Activated CD4-positive, alpha-beta memory T cell treated with anti-CD3 and anti-CD28 coated beads for 36 hours (primary cell): ENCODE measurements at regions of chr9 and their contacts with region 1.

Region 1: DNA sequence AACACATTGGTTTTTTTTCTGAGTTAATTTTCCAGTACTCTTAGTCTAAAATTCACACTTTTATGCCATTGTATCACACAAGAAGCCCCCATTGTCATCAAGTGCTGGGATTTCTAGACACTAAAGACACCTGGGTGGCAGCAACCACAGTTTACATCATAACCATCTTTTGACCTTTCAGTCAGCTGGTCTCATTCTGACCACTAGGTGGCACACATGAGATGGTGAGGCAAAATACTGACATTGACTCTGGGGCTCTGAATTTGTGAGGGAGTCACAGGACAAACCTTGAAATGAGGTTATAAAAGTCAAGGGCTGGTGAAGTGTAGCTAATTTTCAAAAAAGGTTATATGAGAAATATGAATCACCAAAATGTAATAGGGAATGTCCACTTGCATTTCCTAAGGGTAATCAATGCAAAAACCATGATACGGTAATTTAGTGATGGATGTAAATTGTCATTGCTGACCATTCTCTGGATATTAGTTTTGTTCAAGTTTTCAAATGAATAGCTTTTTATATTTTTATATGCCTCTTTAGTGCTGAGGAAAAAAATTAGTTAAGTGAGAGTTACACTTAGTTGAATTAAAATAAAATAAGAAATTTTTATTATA is 229.4 kb downstream of the DMAC1 start:
- DNase-seq: peak; percentile 70
- H3K4me3 Mint-ChIP-seq: no peak overlapping the region
- H3K27ac Mint-ChIP-seq: no peak overlapping the region
- H3K4me1 Mint-ChIP-seq: no peaks in the 10 kb centered on the region
- H3K27me3 Mint-ChIP-seq: peaks cover 9% of the 10 kb centered on the region

Region 2: DNA sequence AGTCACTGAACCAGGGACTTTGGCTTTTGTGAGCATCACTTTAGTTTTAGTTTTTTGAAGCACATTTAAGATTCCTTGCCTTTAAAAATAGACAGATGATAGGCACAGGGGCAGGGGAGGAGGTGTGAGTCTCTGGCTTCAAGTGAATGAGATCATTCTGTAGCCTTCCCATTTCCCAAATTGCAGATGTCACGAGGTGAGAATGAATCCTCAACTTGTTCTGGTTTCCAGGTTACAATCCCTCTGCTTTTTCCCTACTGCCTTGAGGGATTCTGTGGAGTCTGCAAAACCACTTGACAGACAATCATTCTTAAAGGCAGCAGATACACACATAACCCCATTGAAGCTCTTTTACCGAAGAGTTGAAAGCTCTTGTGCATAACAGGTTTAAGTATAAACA is 103.0 kb before region 1 on chr9:
- CTCF ChIA-PET with region 1: no interaction called
- POLR2A ChIA-PET with region 1: no interaction called
- intact Hi-C with region 1: no loop called
- DNase-seq: no peak
- H3K4me3 Mint-ChIP-seq: no peak overlapping the region
- H3K27ac Mint-ChIP-seq: no peak overlapping the region
- H3K4me1 Mint-ChIP-seq: no peaks in the 10 kb centered on the region
- H3K27me3 Mint-ChIP-seq: peaks cover 12% of the 10 kb centered on the region

Region 3: GRCh38 chr9:7613931-7614330 is 43.7 kb after region 1 on chr9:
- CTCF ChIA-PET with region 1: interaction called, 4 read pairs
- POLR2A ChIA-PET with region 1: no interaction called
- intact Hi-C with region 1: loop called (anchors 1 kb)
- DNase-seq: no peak
- H3K4me3 Mint-ChIP-seq: peak overlapping the region; percentile 4
- H3K27ac Mint-ChIP-seq: peak overlapping the region; percentile 19
- H3K4me1 Mint-ChIP-seq: peaks cover 28% of the 10 kb centered on the region
- H3K27me3 Mint-ChIP-seq: no peaks in the 10 kb centered on the region

Region 4: DNA sequence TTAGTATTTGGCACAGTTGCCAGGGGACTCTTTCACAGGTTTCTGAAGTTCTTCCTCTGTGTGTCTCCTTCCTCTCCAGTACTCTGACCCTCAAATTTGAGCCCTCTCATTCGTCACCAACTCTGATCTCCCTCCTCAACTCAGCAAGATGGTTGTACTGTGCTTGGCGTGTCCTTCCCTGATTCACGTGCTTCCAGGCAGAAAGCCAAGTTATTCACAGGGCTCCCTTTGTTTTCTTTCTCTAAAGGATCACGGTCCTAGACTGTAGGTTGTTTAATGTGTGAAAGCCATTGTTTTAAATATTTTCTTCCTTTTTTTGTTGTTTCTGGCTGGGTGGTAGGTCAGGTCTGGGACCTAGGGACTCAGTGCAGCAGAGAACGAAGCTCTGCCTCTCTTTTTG is 86.4 kb after region 1 on chr9:
- CTCF ChIA-PET with region 1: interaction called, 5 read pairs
- POLR2A ChIA-PET with region 1: no interaction called
- intact Hi-C with region 1: loop called (anchors 10 kb)
- DNase-seq: no peak
- H3K4me3 Mint-ChIP-seq: no peak overlapping the region
- H3K27ac Mint-ChIP-seq: no peak overlapping the region
- H3K4me1 Mint-ChIP-seq: peaks cover 4% of the 10 kb centered on the region
- H3K27me3 Mint-ChIP-seq: no peaks in the 10 kb centered on the region

Region 5: DNA sequence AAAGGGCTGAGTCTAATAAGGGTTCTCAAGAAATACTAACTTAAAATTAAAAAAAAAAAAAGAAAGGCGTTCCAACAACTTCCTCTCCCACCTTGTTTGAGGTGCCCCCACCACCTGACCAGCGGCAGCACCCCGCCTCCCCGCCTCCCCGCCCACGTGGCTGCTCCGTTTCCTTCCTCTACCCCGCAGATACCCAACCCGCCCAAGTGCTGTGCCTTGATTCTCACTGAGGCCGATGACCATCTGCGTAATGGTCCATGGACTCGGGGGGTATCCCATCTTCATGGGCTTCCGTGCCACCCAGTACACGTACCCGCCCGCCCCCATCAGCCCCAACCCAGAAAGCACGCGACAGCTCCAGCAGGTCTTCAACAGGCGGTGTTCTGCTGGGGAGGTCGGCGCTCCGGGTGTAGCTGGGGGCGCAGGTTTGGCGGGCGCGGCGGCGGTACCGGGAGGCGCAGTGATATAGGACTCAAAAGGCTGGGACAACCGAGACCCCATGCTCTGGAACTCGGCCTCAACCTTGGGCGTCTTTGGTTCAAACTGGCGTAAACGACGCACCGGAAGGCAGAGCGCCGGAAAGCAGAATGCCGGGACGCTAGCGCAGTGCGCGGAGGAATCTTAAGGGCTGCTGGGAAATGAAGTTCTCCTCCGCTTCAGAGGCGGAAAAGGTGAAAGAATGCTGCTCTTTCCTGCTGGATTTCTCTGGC is 229.2 kb after region 1 on chr9 and contains the start of gene DMAC1:
- CTCF ChIA-PET with region 1: no interaction called
- POLR2A ChIA-PET with region 1: no interaction called
- intact Hi-C with region 1: loop called (anchors 10 kb)
- DNase-seq: peak; percentile 85
- H3K4me3 Mint-ChIP-seq: peak within 1 kb of the TSS; percentile 86
- H3K27ac Mint-ChIP-seq: peak within 1 kb of the TSS; percentile 93
- H3K4me1 Mint-ChIP-seq: peaks cover 22% of the 10 kb centered on the region
- H3K27me3 Mint-ChIP-seq: no peaks in the 10 kb centered on the region
- total RNA-seq, gene DMAC1: 45.4 to 46.6 TPM

Region 6: GRCh38 chr9:8062459-8062858 is 492.2 kb after region 1 on chr9:
- CTCF ChIA-PET with region 1: no interaction called
- POLR2A ChIA-PET with region 1: no interaction called
- intact Hi-C with region 1: loop called (anchors 10 kb)
- DNase-seq: no peak
- H3K4me3 Mint-ChIP-seq: no peak overlapping the region
- H3K27ac Mint-ChIP-seq: no peak overlapping the region
- H3K4me1 Mint-ChIP-seq: peaks cover 2% of the 10 kb centered on the region
- H3K27me3 Mint-ChIP-seq: no peaks in the 10 kb centered on the region

Region 7: DNA sequence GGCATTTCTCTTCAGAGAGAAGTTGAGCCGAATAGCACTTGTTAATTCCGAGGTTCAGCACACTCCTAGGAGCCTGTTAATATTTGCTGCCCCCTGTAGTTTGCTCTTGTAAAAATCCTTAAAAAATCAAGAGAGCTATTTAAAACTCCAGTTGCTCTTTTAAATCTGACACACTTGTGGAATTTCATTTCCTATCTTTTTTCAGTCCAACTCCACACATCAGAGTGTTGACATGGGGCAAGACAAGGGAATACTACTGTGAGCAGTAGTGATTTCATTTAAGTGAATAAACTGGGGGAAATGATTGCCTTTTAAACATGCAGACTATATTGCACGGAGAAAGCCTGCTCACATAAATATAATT is 1325.6 kb after region 1 on chr9:
- CTCF ChIA-PET with region 1: interaction called, 6 read pairs
- POLR2A ChIA-PET with region 1: no interaction called
- intact Hi-C with region 1: loop called (anchors 5 kb)
- DNase-seq: no peak
- H3K4me3 Mint-ChIP-seq: no peak overlapping the region
- H3K27ac Mint-ChIP-seq: no peak overlapping the region
- H3K4me1 Mint-ChIP-seq: no peaks in the 10 kb centered on the region
- H3K27me3 Mint-ChIP-seq: no peaks in the 10 kb centered on the region